Activated CD8-positive, alpha-beta T cell treated with anti-CD3 and anti-CD28 coated beads, Interleukin-2, amount 10 ng/mL, durations not matched to agents 7 days and 5 days (primary cell): ENCODE measurements at regions of chr1 and their contacts with region 1.

Region 1: GRCh38 chr1:67162957-67163356 is 3.3 kb upstream of the IL23R start:
- DNase-seq: peak; percentile 54
- ATAC-seq: peak; percentile 90
- H3K4me3 Mint-ChIP-seq: no peak overlapping the region
- H3K27ac Mint-ChIP-seq: peak overlapping the region; percentile 72
- H3K4me1 Mint-ChIP-seq: peaks cover 25% of the 10 kb centered on the region
- H3K27me3 Mint-ChIP-seq: peaks cover 7% of the 10 kb centered on the region

Region 2: DNA sequence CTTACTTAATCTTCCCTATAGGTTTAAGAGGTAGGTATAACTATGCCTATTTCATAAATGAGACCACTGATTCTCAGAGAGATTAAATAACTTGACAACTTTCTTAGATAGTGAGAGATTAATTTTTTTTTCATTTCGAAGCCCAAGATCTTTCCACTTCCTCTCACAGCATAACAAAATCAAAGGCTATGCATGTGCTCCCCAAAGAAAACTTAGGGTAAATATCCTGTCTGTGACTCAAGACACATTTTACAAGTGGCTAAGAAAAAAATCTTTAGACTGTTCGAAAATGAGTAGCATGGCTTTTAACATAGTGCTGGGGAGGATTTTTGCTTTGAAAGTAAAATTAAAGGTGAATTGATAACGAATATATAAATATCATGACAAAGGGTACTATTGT is 20.0 kb before region 1 on chr1:
- CTCF ChIA-PET with region 1: interaction called, 49 read pairs
- POLR2A ChIA-PET with region 1: no interaction called
- DNase-seq: no peak
- ATAC-seq: peak; percentile 77
- H3K4me3 Mint-ChIP-seq: peak overlapping the region; percentile 9
- H3K27ac Mint-ChIP-seq: peak overlapping the region; percentile 71
- H3K4me1 Mint-ChIP-seq: peaks cover 39% of the 10 kb centered on the region
- H3K27me3 Mint-ChIP-seq: no peaks in the 10 kb centered on the region